CD14-positive monocyte (primary cell): ENCODE measurements at regions of chr5 and their contacts with region 1.

Region 1: DNA sequence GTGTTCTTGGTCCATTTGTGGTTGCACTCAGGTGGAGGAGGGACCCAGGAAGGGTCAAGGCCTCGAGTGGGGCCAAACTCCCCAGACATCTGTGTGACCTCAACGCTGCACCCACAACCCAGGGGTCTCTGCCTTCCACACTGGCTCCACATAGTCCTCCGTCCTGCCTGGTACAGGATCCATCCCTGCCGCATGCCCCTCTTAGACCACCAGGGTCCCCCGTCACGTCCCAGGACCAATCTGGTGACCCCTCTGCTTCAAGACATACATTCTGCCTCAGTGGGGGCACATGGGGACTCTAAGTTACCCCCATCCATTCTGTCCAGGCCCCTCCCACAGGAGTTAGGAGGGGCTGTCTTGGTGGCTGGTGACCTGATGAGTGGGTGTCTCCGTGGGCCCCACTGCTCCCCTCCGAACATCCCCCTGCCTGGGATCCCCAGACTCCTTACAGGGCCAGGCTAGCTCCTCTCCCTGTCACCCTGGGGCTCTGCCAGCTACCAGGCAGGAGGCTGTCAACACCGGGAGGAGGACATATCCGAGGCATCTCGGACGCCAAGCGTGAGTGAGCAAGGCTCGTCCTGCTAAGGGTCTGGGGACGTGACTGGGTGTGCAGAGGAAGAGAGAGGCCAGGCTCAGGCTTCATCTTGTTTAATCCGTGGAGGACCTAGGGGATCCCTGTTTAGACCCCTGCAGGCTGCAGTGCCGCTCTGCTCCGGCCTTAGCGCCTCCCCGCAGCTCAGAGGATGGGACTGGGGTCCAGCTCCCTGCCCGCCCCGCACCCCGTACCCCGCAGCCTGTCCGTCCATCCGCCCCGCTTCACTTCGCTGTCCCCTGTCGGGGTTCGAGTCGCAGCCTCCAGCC is 32.3 kb downstream of the TSPAN17 start:
- DNase-seq: no peak
- H3K4me3 ChIP-seq: no peak overlapping the region
- H3K4me3 Mint-ChIP-seq: peak overlapping the region in 1 of 2 donors; percentile 69
- H3K27ac ChIP-seq: no peak overlapping the region
- H3K27ac Mint-ChIP-seq: peak overlapping the region in 1 of 7 donors; percentile 54
- H3K4me1 ChIP-seq: no peaks in the 10 kb centered on the region
- H3K4me1 Mint-ChIP-seq: no peaks in the 10 kb centered on the region
- H3K27me3 ChIP-seq: peaks cover 13 to 58% of the 10 kb centered on the region in 2 donors
- H3K27me3 Mint-ChIP-seq: peaks cover 59 to 79% (median 70%) of the 10 kb centered on the region in 3 donors
- CTCF ChIP-seq: no peak

Region 2: GRCh38 chr5:176647030-176647866 is 32.3 kb before region 1 on chr5 and contains the start of gene TSPAN17:
- intact Hi-C with region 1: no loop called
- DNase-seq: peak; percentile 96 to 99 (median 98)
- H3K4me3 ChIP-seq: peak within 1 kb of the TSS; percentile 60 to 88 (median 69)
- H3K4me3 Mint-ChIP-seq: peak within 1 kb of the TSS; percentile 84 to 92
- H3K27ac ChIP-seq: peak within 1 kb of the TSS in 1 of 2 donors; percentile 74
- H3K27ac Mint-ChIP-seq: peak within 1 kb of the TSS; percentile 32 to 85 (median 74)
- H3K4me1 ChIP-seq: peaks cover 22 to 28% of the 10 kb centered on the region in 2 donors
- H3K4me1 Mint-ChIP-seq: peaks cover 32% of the 10 kb centered on the region
- H3K27me3 ChIP-seq: no peaks in the 10 kb centered on the region
- H3K27me3 Mint-ChIP-seq: peaks cover 2 to 6% (median 4%) of the 10 kb centered on the region in 3 donors
- CTCF ChIP-seq: no peak
- polyA plus RNA-seq, gene TSPAN17: 22.2 to 27.7 (median 24.1) TPM

Region 3: DNA sequence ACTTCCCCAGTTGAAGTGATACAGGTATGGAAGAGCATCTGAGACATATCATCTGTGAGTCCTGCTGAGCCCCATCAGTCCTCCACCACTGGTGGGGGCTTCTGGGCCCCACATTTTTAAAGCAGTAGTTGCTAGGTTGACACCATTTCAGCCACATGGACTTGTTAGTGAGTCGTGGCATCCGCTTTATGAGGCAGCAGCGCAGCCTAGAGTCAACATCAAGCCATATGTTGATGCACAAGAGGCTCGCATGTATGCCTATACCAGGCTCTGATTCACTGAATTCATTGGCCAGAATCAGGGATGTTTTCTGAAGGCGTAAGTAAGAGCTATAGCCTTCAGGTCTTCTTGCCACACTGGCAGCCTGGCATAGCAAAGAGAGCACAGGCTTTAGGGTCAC is 369.7 kb after region 1 on chr5:
- intact Hi-C with region 1: loop called in 1 of 2 experiments (anchors 10 kb)
- DNase-seq: no peak
- H3K4me3 ChIP-seq: no peak overlapping the region
- H3K4me3 Mint-ChIP-seq: no peak overlapping the region
- H3K27ac ChIP-seq: no peak overlapping the region
- H3K27ac Mint-ChIP-seq: peak overlapping the region in 1 of 7 donors; percentile 42
- H3K4me1 ChIP-seq: no peaks in the 10 kb centered on the region
- H3K4me1 Mint-ChIP-seq: no peaks in the 10 kb centered on the region
- H3K27me3 ChIP-seq: no peaks in the 10 kb centered on the region
- H3K27me3 Mint-ChIP-seq: peaks cover 0 to 2% (median 0%) of the 10 kb centered on the region in 3 donors
- CTCF ChIP-seq: no peak